ENCODE measurements at regions of chr16 and their contacts with region 1.

Region 1: DNA sequence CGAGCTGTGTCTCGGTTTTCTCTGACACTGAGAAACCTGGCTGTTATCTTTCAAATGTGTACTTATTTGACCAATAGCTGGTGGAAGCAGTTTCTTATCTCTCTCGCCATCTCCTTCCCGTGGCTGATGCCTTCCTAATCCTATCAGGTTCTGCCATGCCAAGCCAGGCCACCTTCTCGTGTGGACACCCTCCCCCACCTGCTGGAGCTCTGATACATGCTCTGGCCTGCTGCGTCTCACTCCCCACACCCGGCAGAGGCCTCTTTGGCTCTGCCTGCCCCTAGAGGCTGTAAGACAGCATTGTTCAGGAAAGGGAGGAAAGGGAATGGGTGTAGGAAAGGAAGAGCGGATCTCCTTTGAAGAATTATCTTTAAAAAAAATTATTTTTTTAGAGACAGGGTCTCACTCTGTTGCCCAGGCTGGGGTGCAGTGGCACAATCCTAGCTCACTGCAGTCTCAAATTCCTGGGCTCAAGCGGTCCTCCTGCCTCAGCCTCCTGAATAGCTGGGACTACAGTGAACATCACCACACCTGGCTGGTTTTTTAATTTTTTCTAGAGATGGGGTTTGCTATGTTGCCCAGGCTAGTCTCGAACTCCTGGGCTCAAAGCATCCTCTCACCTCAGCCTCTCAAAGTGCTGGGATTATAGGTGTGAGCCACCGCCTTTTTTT is 7.5 kb upstream of the ARMC5 start:
- DNase-seq: peak; percentile 44 to 57
- H3K4me3 ChIP-seq: no peak overlapping the region
- H3K27ac ChIP-seq: peak overlapping the region; percentile 75; the same call in 1 of the 2 replicates
- H3K4me1 ChIP-seq: peaks cover 49% of the 10 kb centered on the region
- H3K27me3 ChIP-seq: no peaks in the 10 kb centered on the region
- CTCF ChIP-seq: peak; percentile 66; the same call in 1 of the 2 replicates

Region 2: GRCh38 chr16:30853758-30854157 is 598.1 kb before region 1 on chr16:
- CTCF ChIA-PET with region 1: no interaction called
- POLR2A ChIA-PET with region 1: interaction called, 50 read pairs
- intact Hi-C with region 1: no loop called
- DNase-seq: peak in 1 of 2 experiments; percentile 95
- H3K4me3 ChIP-seq: no peak overlapping the region
- H3K27ac ChIP-seq: no peak overlapping the region; the same call in 1 of the 2 replicates
- H3K4me1 ChIP-seq: peaks cover 46% of the 10 kb centered on the region
- H3K27me3 ChIP-seq: no peaks in the 10 kb centered on the region
- CTCF ChIP-seq: no peak

Region 3: GRCh38 chr16:31073968-31074813 is 377.6 kb before region 1 on chr16 and contains the starts of genes ZNF646 and ZNF668:
- CTCF ChIA-PET with region 1: no interaction called
- POLR2A ChIA-PET with region 1: no interaction called
- intact Hi-C with region 1: loop called (anchors 2 kb)
- DNase-seq: peak; percentile 98 to 99
- H3K4me3 ChIP-seq: peak within 1 kb of the TSS; percentile 89
- H3K27ac ChIP-seq: peak within 1 kb of the TSS; percentile 62
- H3K4me1 ChIP-seq: peaks cover 20% of the 10 kb centered on the region
- H3K27me3 ChIP-seq: no peaks in the 10 kb centered on the region
- CTCF ChIP-seq: no peak
- total RNA-seq, gene ZNF646: 25.4 and 30.7 TPM in 2 replicates
- total RNA-seq, gene ZNF668: 13.2 and 17.4 TPM in 2 replicates

Region 4: DNA sequence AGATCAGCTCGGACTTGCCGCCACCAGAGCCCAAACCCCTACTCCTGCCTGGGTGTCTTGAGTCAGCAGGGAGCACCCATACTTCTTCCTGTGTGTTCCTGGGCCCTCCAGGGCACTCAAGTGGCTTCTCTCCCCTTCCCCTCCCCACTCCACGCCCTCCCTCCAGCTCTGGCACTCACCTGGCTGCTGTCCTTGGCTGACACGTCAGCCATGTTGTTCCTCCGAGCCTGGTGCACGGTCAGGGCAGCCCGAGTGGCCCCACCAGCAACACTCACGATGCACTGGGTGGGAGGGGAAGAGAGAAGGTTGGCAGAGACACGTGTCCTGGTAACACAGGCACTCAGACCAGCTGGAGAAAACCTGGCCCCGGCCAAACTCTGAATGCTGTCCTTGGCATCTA is 44.9 kb after region 1 on chr16:
- CTCF ChIA-PET with region 1: no interaction called
- POLR2A ChIA-PET with region 1: no interaction called
- intact Hi-C with region 1: no loop called
- DNase-seq: no peak
- H3K4me3 ChIP-seq: no peak overlapping the region
- H3K27ac ChIP-seq: no peak overlapping the region
- H3K4me1 ChIP-seq: no peaks in the 10 kb centered on the region
- H3K27me3 ChIP-seq: no peaks in the 10 kb centered on the region
- CTCF ChIP-seq: no peak